Activated T-helper 2 cell treated with anti-CD3 and anti-CD28 coated beads, Interferon-gamma antibody, Interleukin-2, Interleukin-4, amounts not matched to agents 10 μg/mL and 5 μg/mL and 100 μg/mL, durations not matched to agents 14 hours and 24 hours and 36 hours (primary cell): ENCODE measurements at regions of chr5 and their contacts with region 1.

Region 1: DNA sequence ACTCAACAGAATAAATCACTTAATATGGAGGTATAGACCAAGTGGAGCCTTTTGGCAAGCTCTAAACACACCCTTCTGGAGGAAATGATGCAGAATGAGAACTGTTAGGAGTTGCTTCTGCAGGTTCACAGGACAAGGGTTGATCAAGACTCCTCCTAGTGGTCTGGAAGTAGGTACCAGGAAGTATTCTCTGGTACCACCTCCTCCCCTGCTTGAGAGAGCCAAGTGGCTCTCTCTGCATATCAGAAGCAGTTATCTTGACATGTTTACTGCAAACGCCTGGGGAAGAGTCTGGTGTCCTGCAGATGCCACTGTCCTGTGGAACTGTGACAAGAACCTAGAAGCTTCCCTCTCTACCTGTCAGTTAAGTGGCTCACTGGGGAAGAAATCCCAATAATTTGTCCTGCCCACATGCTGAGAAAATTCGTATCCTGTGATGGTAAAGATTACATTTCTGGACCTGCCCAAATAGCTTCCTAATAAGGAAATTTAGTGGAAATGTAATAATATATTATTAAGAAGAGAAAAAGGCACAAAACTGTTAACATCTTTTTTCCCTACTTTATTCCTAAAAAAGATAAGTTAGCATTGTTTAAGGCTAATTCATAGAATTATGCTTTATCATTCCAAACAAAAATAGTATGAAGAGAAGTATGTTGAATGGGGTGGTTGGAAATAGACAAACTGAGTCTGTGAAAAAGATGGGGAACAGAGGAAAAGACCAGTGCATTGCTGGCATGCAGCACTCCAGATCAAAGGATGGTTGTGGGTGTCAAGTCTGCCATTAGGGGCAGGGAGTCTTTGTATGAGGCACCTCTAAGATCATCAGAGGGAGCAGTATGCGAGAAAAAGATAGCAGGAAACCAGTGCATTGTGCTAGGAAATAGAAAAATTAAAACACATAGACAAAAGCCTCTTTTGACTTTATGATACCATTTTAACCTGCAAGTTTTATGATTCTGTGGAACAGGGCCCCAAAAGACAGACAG is 118.8 kb downstream of the CDC42SE2 start:
- DNase-seq: peak; percentile 56
- H3K4me3 Mint-ChIP-seq: peak overlapping the region; percentile 40
- H3K27ac Mint-ChIP-seq: peak overlapping the region; percentile 97
- H3K4me1 Mint-ChIP-seq: peaks cover 80% of the 10 kb centered on the region
- H3K27me3 Mint-ChIP-seq: no peaks in the 10 kb centered on the region

Region 2: DNA sequence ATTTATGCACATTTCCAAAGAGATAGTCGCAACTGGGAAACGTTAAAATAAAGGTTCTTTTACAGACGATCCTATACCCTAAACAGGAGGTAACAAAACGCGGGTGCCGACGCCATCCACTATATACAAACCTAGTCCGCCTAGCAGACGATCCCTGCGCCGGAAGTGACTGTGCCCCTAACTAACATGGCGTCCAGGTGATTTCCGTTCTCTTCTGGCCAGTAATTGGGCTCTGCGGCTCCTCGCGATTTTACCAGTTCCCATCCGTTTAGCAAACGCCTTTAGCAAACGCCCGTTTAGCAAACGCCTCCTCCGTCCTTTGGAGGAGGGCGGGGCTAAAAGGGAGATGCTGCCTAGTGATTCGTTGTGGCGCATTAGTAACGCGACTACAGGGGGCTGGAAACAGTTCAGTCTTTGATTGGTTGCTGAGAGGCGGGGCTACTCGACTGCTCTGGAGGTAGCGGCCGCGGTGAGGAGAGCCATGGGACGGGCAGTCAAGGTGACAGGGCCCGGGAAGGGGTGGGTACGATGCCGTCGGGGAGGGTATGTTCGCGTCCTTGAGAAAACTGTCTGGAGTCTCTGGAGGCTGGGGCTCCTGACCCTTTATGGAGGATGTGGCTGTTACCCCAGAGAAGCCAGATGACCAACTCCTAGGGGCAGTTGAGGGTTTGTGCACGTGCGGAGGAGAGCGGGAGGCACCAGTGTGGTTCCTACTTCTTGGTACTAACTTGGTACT is 212.0 kb before region 1 on chr5 and contains the start of gene LYRM7:
- intact Hi-C with region 1: loop called (anchors 1 kb)
- DNase-seq: peak; percentile 97
- H3K4me3 Mint-ChIP-seq: peak within 1 kb of the TSS; percentile 99
- H3K27ac Mint-ChIP-seq: peak within 1 kb of the TSS; percentile 95
- H3K4me1 Mint-ChIP-seq: peaks cover 34% of the 10 kb centered on the region
- H3K27me3 Mint-ChIP-seq: no peaks in the 10 kb centered on the region
- total RNA-seq, gene LYRM7: 14.0 and 20.3 TPM in 2 replicates

Region 3: DNA sequence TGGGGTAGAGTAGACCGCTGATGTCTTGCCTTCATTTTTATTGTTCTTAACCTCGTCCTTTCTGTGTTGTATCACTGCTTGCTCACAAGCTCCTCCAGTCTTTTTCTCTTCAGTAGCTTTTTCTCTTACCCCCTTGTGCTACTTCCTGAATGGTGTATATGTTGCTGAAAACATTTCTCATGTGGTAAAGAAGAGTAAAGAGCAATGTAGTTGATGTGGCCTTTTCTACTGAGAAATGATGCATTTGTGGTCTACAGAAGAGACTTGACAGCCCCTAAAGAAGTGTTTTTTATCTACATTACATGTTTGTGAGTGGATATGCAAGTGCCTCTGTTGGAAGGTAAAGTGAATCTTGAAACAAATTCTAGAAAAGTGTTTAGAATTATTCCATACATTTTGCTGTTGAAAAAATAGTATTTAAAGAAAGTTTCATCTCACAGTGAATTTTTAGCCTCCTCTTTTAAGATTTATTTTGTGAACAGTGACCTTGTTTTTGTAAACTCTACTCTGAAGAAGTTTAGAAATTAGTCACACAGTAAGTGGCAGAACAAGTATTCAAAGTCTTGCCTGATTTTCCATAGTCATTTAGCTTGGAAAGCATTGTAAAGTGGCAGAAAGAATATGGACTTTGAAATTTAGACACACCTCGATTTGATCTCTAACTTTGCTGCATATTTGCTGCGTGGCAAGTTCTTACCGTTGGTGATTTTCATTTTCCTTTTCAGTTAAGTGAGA is 101.4 kb before region 1 on chr5:
- intact Hi-C with region 1: loop called (anchors 1 kb)
- DNase-seq: no peak
- H3K4me3 Mint-ChIP-seq: peak overlapping the region; percentile 82
- H3K27ac Mint-ChIP-seq: peak overlapping the region; percentile 96
- H3K4me1 Mint-ChIP-seq: peaks cover 78% of the 10 kb centered on the region
- H3K27me3 Mint-ChIP-seq: no peaks in the 10 kb centered on the region

Region 4: GRCh38 chr5:131322926-131323325 is 59.8 kb before region 1 on chr5:
- intact Hi-C with region 1: loop called (anchors 2 kb)
- DNase-seq: no peak
- H3K4me3 Mint-ChIP-seq: no peak overlapping the region
- H3K27ac Mint-ChIP-seq: peak overlapping the region; percentile 11
- H3K4me1 Mint-ChIP-seq: peaks cover 40% of the 10 kb centered on the region
- H3K27me3 Mint-ChIP-seq: no peaks in the 10 kb centered on the region

Region 5: DNA sequence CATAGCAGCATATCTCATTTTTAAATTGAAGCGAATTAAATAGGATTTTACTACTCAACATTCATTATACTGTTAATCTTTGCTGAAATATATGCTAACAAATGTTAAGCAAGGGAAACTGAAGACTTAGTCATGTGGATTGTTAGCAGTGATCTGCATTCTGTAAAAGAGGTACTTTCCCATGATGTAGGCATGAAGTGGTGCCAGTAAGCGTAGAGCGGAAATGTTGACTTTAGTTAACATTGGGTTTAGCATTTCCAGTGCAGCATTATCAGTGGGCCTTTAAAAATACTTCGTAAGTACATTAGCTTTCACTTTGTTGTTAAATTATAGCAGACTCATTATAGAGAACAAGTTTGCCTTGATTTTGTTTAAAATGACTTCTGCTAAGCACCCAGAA is 11.4 kb after region 1 on chr5:
- intact Hi-C with region 1: loop called (anchors 1 kb)
- DNase-seq: peak; percentile 45
- H3K4me3 Mint-ChIP-seq: peak overlapping the region; percentile 63
- H3K27ac Mint-ChIP-seq: peak overlapping the region; percentile 94
- H3K4me1 Mint-ChIP-seq: peaks cover 67% of the 10 kb centered on the region
- H3K27me3 Mint-ChIP-seq: no peaks in the 10 kb centered on the region